Heart left ventricle (tissue), 16 donors: ENCODE measurements at regions of chr1 and their contacts with region 1.

Region 1: DNA sequence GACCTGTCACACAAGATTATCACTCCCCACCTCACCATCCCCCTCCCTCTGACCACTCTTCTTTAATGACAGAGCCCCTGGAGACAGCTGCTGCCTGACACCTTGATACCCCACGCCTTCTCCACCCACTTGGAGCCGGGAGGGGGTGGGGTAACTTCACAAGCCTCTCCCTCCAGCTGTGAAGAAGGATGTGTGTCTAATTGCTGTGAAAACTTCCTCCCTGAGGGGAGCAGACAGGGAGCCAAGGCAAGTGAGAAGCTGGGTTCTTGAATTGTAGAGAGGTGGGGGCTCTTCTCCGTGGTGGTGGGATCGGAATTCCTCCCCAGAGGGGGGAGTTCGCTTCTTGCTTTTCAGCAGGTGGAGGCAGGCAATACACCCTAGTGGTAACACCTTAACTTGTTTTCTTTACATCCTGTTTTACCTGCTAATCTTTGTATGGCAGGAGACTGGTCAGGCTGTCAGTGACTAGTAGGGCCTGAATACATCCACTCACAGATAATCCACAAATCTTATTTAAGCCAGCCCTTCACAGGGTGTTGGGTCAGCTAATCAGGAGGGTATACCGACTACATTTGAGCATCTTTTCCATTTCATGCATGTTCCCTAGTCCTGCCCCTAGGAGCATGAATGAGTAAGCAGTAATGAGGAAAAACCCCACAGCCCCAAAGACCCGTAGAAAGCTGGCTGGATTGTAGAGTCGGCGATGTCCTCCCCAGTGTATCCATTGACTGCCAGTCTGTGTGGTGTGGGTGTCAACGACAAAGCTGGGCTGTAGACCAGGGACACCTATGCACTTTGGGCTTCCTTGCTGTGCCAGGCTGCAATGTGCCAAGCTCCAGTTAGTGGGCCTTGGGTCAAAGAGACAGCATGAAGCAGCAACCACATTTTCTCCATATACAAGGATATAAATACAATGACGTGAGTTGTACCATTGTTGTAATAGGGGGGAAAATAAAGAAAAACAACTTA is 57.3 kb downstream of the NFASC start:
- DNase-seq: no peak
- ATAC-seq: no peak
- H3K4me3 ChIP-seq: no peak overlapping the region
- H3K27ac ChIP-seq: no peak overlapping the region
- H3K4me1 ChIP-seq: peaks cover 0 to 31% (median 10%) of the 10 kb centered on the region in 12 donors
- H3K27me3 ChIP-seq: peaks cover 0 to 13% (median 0%) of the 10 kb centered on the region in 9 donors
- CTCF ChIP-seq: no peak
- POLR2A ChIP-seq: no peak

Region 2: GRCh38 chr1:204578867-204579664 is 348.9 kb before region 1 on chr1:
- intact Hi-C with region 1: loop called in 1 of 10 experiments (anchors 10 kb)
- DNase-seq: peak; percentile 33 to 72 (median 39)
- ATAC-seq: peak; percentile 18 to 65 (median 41)
- H3K4me3 ChIP-seq: peak overlapping the region in 10 of 12 donors; percentile 18 to 59 (median 41)
- H3K27ac ChIP-seq: peak overlapping the region in 8 of 12 donors; percentile 1 to 82 (median 24)
- H3K4me1 ChIP-seq: peaks cover 0 to 28% (median 7%) of the 10 kb centered on the region in 12 donors
- H3K27me3 ChIP-seq: no peaks in the 10 kb centered on the region
- CTCF ChIP-seq: no peak
- POLR2A ChIP-seq: no peak

Region 3: GRCh38 chr1:204640578-204640977 is 287.4 kb before region 1 on chr1:
- intact Hi-C with region 1: no loop called
- DNase-seq: no peak
- ATAC-seq: no peak
- H3K4me3 ChIP-seq: no peak overlapping the region
- H3K27ac ChIP-seq: no peak overlapping the region
- H3K4me1 ChIP-seq: peaks cover 0 to 6% (median 0%) of the 10 kb centered on the region in 12 donors
- H3K27me3 ChIP-seq: peaks cover 0 to 14% (median 0%) of the 10 kb centered on the region in 9 donors
- CTCF ChIP-seq: no peak
- POLR2A ChIP-seq: no peak

Region 4: DNA sequence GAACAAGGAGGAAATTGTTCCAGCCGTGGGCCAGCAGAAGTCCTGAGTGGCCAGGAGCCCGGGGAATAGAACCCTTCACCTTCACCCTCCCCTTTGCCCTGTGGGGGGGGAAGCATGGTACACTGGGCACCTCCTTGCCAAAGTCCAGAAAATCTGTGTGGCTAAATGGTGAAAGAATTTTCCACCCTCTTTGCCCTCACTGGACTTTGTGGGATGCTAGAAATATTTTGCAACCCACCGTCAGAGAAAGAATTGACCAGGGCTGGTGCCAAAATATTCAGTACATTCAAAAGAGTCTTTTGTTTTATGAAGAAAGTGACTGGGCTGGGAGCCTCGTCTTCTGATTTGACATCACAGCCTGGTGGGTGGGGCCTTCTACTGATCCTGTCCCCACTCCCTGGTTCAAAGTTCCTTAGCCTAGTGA is 42.7 kb before region 1 on chr1:
- intact Hi-C with region 1: loop called in 1 of 10 experiments (anchors 5 kb)
- DNase-seq: peak in 3 of 5 donors; percentile 46 to 57 (median 53)
- ATAC-seq: peak in 2 of 4 donors; percentile 21 to 55
- H3K4me3 ChIP-seq: peak overlapping the region in 4 of 12 donors; percentile 7 to 31 (median 16)
- H3K27ac ChIP-seq: peak overlapping the region in 10 of 12 donors; percentile 12 to 75 (median 54)
- H3K4me1 ChIP-seq: peaks cover 0 to 70% (median 23%) of the 10 kb centered on the region in 12 donors
- H3K27me3 ChIP-seq: peaks cover 0 to 31% (median 0%) of the 10 kb centered on the region in 9 donors
- CTCF ChIP-seq: no peak
- POLR2A ChIP-seq: no peak

Region 5: DNA sequence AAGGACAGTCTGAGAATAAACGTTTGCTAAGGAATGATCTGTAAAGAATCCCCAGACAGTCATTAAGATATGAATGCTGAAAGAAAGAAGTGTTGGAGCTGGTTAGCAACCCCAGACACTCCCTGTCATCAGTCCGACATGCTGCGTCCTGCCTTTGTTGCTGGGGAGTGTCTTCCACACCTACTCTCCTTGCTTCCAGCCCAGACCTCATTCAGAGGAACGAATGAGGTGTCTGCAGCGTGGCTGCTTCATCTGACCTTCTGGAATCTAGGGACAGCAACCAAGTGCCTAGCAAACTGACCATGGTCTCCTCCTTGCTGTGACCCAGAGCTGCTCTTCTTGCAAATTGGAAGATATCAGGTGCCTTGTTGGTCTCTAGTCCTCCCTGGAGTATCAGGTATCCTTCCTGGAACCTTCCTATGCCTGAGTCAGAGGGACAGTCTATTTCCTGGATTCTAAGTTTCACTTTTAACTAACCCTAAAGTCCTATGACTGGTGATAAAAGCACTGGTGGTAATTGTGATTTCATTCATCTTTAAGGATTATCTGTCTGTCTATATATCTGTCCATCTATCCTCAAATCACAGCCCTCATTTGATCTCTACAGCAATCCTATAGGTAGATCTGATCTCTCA is 12.0 kb before region 1 on chr1:
- intact Hi-C with region 1: no loop called
- DNase-seq: no peak
- ATAC-seq: peak in 3 of 4 donors; percentile 11 to 59 (median 18)
- H3K4me3 ChIP-seq: no peak overlapping the region
- H3K27ac ChIP-seq: no peak overlapping the region
- H3K4me1 ChIP-seq: peaks cover 0 to 10% (median 0%) of the 10 kb centered on the region in 12 donors
- H3K27me3 ChIP-seq: peaks cover 0 to 3% (median 0%) of the 10 kb centered on the region in 9 donors
- CTCF ChIP-seq: no peak
- POLR2A ChIP-seq: no peak

Region 6: DNA sequence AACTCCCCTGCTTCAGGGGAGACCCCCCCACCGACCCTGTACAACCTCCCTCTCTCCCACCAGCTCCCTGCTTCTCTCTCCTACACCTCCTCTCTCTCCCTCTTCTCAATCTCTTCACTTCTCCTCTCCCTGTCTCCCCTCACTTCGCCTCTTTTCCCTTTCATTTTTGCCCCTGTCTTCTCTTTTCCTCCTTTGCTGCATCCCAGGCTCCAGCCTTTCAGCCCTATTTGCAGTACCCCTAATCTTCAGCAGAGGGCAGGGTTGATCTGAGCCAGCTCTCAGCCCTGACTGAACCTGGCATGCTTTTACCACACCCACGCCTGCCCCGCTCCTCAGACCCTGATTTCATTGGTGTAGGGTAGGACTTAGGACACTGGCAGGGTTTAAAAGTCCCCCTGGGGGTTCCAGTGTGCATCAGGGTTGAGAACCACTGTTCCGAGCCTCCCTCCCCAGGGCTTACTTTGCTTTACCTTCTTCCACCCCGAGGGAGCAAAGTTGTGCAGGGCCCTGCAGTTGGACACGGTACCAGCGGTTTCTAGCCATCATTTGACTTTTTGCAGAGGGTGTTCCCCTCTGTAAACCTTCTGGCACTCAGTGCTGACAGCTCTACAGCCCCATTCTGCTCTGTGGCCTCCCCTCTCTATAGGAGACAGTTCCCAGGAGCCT is 47.7 kb after region 1 on chr1:
- intact Hi-C with region 1: no loop called
- DNase-seq: peak in 3 of 5 donors; percentile 35 to 45 (median 45)
- ATAC-seq: peak; percentile 55 to 80 (median 71)
- H3K4me3 ChIP-seq: no peak overlapping the region
- H3K27ac ChIP-seq: no peak overlapping the region
- H3K4me1 ChIP-seq: peaks cover 0 to 22% (median 0%) of the 10 kb centered on the region in 12 donors
- H3K27me3 ChIP-seq: no peaks in the 10 kb centered on the region
- CTCF ChIP-seq: peak; percentile 70 to 83 (median 76)
- POLR2A ChIP-seq: no peak